ENCODE measurements at regions of chr11 and their contacts with region 1.

Region 1: GRCh38 chr11:125625630-125626287 is 796 bp downstream of the CHEK1 start:
- DNase-seq: peak; percentile 80
- ATAC-seq: peak; percentile 93
- H3K4me3 Mint-ChIP-seq: peak overlapping the region; percentile 91
- H3K27ac Mint-ChIP-seq: peak overlapping the region; percentile 98
- H3K4me1 Mint-ChIP-seq: peaks cover 20% of the 10 kb centered on the region
- H3K27me3 Mint-ChIP-seq: no peaks in the 10 kb centered on the region
- CTCF ChIP-seq: no peak

Region 2: GRCh38 chr11:125568970-125569914 is 56.5 kb before region 1 on chr11 and contains the start of gene EI24:
- CTCF ChIA-PET with region 1: no interaction called
- POLR2A ChIA-PET with region 1: interaction called, 10 read pairs
- intact Hi-C with region 1: loop called (anchors 1 kb)
- DNase-seq: peak; percentile 83
- ATAC-seq: peak; percentile 97
- H3K4me3 Mint-ChIP-seq: peak within 1 kb of the TSS; percentile 93
- H3K27ac Mint-ChIP-seq: peak within 1 kb of the TSS; percentile 88
- H3K4me1 Mint-ChIP-seq: peaks cover 22% of the 10 kb centered on the region
- H3K27me3 Mint-ChIP-seq: no peaks in the 10 kb centered on the region
- CTCF ChIP-seq: no peak
- total RNA-seq, gene EI24: 34.3 and 34.5 TPM in 2 replicates

Region 3: DNA sequence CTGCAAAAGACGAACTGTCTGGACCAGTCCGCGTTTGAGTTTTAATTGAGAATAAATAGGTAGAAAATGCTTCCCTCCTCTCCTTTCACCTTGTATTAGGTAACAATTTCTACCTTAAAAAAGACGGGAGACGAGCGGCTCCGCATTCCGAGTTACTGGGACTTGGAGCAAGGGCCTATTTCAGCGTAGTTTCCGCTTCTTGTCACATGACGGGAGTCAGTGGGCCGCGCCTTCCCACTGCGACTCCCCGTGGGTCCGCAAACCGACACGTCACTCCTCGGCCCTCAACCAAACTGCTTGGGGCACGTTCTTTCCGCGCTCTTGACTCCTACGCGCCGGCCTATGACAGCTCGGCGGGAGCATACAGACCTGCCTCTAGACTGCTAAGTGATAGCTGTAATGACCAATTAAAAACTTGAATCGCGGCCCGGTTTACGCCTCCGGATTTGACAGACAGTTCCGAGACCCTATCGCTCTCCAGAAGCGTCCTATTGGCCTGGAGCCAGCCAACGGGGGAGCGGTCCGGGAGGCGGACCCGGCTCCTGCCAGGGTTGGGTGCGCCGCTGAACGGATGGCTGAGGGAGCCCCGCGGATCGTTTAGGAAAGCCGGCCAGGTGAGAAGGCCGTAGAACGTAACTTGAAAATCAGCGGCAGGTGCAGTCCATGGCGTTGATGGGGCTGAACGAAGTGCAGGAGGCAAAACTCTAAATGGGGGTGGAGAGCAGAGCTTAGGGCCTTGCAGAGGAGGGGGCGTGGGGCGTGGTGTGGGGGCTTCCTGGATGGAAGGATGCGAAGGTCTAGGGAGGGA is 33.2 kb before region 1 on chr11 and contains the start of gene STT3A:
- CTCF ChIA-PET with region 1: no interaction called
- POLR2A ChIA-PET with region 1: interaction called, 49 read pairs
- intact Hi-C with region 1: loop called (anchors 1 kb)
- DNase-seq: peak; percentile 90
- ATAC-seq: peak; percentile 92
- H3K4me3 Mint-ChIP-seq: peak within 1 kb of the TSS; percentile 95
- H3K27ac Mint-ChIP-seq: peak within 1 kb of the TSS; percentile 99
- H3K4me1 Mint-ChIP-seq: peaks cover 58% of the 10 kb centered on the region
- H3K27me3 Mint-ChIP-seq: no peaks in the 10 kb centered on the region
- CTCF ChIP-seq: no peak
- total RNA-seq, gene STT3A: 79.4 and 86.5 TPM in 2 replicates

Region 4: DNA sequence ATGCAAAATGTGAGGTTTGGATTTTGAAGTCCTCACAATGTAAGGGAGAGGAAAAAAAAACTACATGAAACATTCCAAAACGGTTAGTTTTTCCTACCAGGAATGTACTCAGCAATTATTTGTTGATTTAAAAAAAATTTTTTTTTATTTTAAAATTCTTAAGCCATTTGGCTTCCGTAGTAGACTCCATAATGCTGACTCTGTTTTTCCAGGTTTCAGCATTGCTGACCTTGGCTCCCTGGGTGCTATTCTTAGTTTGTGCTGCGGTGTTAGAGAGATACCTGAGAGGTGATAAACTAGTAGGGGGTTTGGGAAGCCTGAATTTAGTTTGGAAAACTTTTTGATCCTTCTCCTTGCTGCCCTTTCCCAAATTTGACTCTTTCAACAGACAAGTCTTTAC is 22.6 kb before region 1 on chr11:
- CTCF ChIA-PET with region 1: no interaction called
- POLR2A ChIA-PET with region 1: interaction called, 3 read pairs
- intact Hi-C with region 1: loop called (anchors 2 kb)
- DNase-seq: no peak
- ATAC-seq: no peak
- H3K4me3 Mint-ChIP-seq: no peak overlapping the region
- H3K27ac Mint-ChIP-seq: no peak overlapping the region
- H3K4me1 Mint-ChIP-seq: no peaks in the 10 kb centered on the region
- H3K27me3 Mint-ChIP-seq: no peaks in the 10 kb centered on the region
- CTCF ChIP-seq: no peak

Region 5: GRCh38 chr11:125874556-125875124 is 248.9 kb after region 1 on chr11:
- CTCF ChIA-PET with region 1: no interaction called
- POLR2A ChIA-PET with region 1: no interaction called
- intact Hi-C with region 1: loop called (anchors 1 kb)
- DNase-seq: no peak
- ATAC-seq: peak; percentile 58
- H3K4me3 Mint-ChIP-seq: no peak overlapping the region
- H3K27ac Mint-ChIP-seq: no peak overlapping the region
- H3K4me1 Mint-ChIP-seq: peaks cover 10% of the 10 kb centered on the region
- H3K27me3 Mint-ChIP-seq: no peaks in the 10 kb centered on the region
- CTCF ChIP-seq: no peak

Region 6: GRCh38 chr11:125902927-125903710 is 277.4 kb after region 1 on chr11 and contains the start of gene PUS3:
- CTCF ChIA-PET with region 1: interaction called, 3 read pairs
- POLR2A ChIA-PET with region 1: interaction called, 6 read pairs
- intact Hi-C with region 1: loop called (anchors 1 kb)
- DNase-seq: peak; percentile 77
- ATAC-seq: peak; percentile 96
- H3K4me3 Mint-ChIP-seq: peak within 1 kb of the TSS; percentile 94
- H3K27ac Mint-ChIP-seq: peak within 1 kb of the TSS; percentile 88
- H3K4me1 Mint-ChIP-seq: peaks cover 31% of the 10 kb centered on the region
- H3K27me3 Mint-ChIP-seq: peaks cover 22% of the 10 kb centered on the region
- CTCF ChIP-seq: no peak
- total RNA-seq, gene PUS3: 10.2 and 13.2 TPM in 2 replicates

Region 7: DNA sequence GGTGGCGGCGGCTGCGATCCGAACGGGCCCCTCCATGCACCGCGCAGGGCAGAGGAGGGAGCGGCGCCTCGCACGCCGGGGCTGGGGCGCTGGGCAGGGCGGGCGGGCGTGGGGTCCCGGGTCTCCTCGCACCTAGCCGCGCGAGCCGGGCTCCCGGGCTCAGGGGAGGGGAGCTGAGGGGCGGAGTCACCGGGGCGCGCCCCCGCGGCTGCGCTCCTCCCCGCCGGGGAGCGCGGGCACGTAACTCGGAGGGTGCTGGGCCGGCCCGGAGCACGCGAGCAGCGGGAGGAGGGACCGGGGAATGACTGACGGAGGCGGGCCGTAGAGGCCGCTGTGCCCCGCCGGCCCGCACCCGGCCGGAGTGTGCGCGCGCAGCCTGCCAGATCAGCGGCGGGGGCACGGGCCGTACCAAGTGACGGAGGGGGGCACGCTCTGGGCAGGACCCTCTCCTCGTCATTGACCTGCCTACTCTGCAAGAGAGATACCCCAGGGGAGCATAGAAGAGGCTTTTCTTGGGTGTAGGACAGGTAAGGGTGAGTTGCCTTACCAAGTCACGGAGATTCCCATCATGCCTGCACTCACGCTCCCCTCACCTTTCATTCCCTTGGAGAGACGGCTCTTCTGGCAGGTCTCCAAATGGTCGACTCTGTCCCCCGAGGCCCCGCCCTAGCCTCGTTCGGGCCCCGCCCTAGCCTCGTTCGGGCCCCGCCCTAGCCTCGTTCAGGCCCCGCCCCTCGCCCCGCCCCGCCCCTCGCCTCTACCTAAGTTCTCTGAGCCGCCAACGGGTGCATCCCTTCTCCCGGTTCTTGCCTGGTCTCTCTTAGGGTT is 437.1 kb after region 1 on chr11 and contains the start of gene CDON:
- CTCF ChIA-PET with region 1: no interaction called
- POLR2A ChIA-PET with region 1: no interaction called
- intact Hi-C with region 1: loop called (anchors 5 kb)
- DNase-seq: peak; percentile 72
- ATAC-seq: peak; percentile 90
- H3K4me3 Mint-ChIP-seq: peak within 1 kb of the TSS; percentile 81
- H3K27ac Mint-ChIP-seq: no peak within 1 kb of the TSS
- H3K4me1 Mint-ChIP-seq: peaks cover 6% of the 10 kb centered on the region
- H3K27me3 Mint-ChIP-seq: peaks cover 38% of the 10 kb centered on the region
- CTCF ChIP-seq: no peak
- total RNA-seq, gene CDON: 0.24 and 0.27 TPM in 2 replicates